ENCODE measurements at regions of chr6 and their contacts with region 1.

Region 1: DNA sequence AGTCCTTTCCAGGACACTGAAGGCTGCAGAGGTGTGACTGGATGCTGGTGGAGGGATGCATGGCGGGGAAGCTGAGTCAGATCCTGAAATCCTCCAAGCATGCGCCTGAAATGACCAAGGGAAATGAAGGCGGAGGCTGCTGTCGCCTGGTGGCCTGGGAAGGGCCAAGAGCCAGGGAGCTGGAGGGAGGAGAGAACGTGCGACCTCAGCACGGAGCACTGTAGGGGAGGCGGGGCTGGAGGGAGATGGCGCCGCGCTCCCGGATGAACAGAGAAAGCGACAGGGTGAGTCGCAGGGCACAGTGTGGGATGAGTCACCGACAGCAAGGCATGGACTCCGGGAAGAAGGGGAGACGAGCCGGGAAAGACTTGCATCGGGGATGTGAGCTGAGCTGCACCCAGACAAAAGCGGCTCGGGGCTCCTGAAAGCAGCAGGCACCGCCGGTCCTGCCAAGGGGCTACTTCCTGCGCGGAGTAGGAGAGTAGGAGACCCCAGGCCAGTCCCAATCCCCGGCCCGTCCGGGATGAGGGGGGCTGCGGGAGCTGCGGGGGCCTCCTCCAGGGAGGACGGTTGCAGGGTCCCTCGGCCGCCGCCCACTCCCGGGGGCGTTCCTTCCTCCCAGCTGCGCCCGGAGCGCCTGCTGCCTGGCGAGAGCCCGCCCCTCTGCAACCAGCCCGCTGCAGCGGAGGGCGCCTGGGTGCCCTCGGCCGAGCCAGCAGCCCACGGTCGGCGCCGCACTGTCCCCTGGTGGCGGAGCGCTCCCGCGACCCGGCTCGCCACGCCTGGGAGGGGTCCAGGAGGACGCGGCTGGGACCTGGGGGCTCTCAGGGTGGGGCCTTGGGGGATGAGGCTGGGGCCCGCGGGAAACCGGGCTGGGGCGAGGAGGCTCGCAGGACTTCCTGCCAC is 11.0 kb upstream of the NQO2 start:
- DNase-seq: peak in 8 of 9 donors; percentile 68 to 84 (median 78)
- ATAC-seq: peak; percentile 87
- H3K4me3 ChIP-seq: peak overlapping the region; percentile 76
- H3K4me3 Mint-ChIP-seq: peak overlapping the region; percentile 88 to 98 (median 96)
- H3K27ac ChIP-seq: peak overlapping the region; percentile 94
- H3K27ac Mint-ChIP-seq: peak overlapping the region; percentile 94 to 100 (median 100)
- H3K4me1 ChIP-seq: peaks cover 14% of the 10 kb centered on the region in 2 donors
- H3K4me1 Mint-ChIP-seq: peaks cover 15 to 41% (median 30%) of the 10 kb centered on the region in 7 donors
- H3K27me3 ChIP-seq: no peaks in the 10 kb centered on the region
- H3K27me3 Mint-ChIP-seq: peaks cover 0 to 11% (median 0%) of the 10 kb centered on the region in 5 donors

Region 2: GRCh38 chr6:2841264-2842138 is 147.2 kb before region 1 on chr6 and contains the start of gene SERPINB1:
- CTCF ChIA-PET with region 1: interaction called, 53 read pairs
- POLR2A ChIA-PET with region 1: interaction called, 156 read pairs
- intact Hi-C with region 1: loop called (anchors 1 kb)
- DNase-seq: peak; percentile 52 to 88 (median 67)
- ATAC-seq: peak; percentile 89
- H3K4me3 ChIP-seq: peak within 1 kb of the TSS; percentile 69
- H3K4me3 Mint-ChIP-seq: peak within 1 kb of the TSS; percentile 86 to 100 (median 92)
- H3K27ac ChIP-seq: peak within 1 kb of the TSS; percentile 85
- H3K27ac Mint-ChIP-seq: peak within 1 kb of the TSS; percentile 86 to 96 (median 95)
- H3K4me1 ChIP-seq: peaks cover 16 to 29% of the 10 kb centered on the region in 2 donors
- H3K4me1 Mint-ChIP-seq: peaks cover 33 to 68% (median 60%) of the 10 kb centered on the region in 7 donors
- H3K27me3 ChIP-seq: no peaks in the 10 kb centered on the region
- H3K27me3 Mint-ChIP-seq: no peaks in the 10 kb centered on the region
- total RNA-seq, gene SERPINB1: 43.8 to 108 (median 62.5) TPM

Region 3: GRCh38 chr6:2900821-2901644 is 87.6 kb before region 1 on chr6:
- CTCF ChIA-PET with region 1: no interaction called
- POLR2A ChIA-PET with region 1: interaction called, 35 read pairs
- intact Hi-C with region 1: loop called in 1 of 2 experiments (anchors 2 kb)
- DNase-seq: no peak
- ATAC-seq: no peak
- H3K4me3 ChIP-seq: peak overlapping the region; percentile 85
- H3K4me3 Mint-ChIP-seq: peak overlapping the region; percentile 96 to 100 (median 99)
- H3K27ac ChIP-seq: peak overlapping the region; percentile 90
- H3K27ac Mint-ChIP-seq: peak overlapping the region; percentile 88 to 98 (median 97)
- H3K4me1 ChIP-seq: peaks cover 29 to 33% of the 10 kb centered on the region in 2 donors
- H3K4me1 Mint-ChIP-seq: peaks cover 54 to 71% (median 66%) of the 10 kb centered on the region in 7 donors
- H3K27me3 ChIP-seq: no peaks in the 10 kb centered on the region
- H3K27me3 Mint-ChIP-seq: peaks cover 0 to 4% (median 0%) of the 10 kb centered on the region in 5 donors

Region 4: DNA sequence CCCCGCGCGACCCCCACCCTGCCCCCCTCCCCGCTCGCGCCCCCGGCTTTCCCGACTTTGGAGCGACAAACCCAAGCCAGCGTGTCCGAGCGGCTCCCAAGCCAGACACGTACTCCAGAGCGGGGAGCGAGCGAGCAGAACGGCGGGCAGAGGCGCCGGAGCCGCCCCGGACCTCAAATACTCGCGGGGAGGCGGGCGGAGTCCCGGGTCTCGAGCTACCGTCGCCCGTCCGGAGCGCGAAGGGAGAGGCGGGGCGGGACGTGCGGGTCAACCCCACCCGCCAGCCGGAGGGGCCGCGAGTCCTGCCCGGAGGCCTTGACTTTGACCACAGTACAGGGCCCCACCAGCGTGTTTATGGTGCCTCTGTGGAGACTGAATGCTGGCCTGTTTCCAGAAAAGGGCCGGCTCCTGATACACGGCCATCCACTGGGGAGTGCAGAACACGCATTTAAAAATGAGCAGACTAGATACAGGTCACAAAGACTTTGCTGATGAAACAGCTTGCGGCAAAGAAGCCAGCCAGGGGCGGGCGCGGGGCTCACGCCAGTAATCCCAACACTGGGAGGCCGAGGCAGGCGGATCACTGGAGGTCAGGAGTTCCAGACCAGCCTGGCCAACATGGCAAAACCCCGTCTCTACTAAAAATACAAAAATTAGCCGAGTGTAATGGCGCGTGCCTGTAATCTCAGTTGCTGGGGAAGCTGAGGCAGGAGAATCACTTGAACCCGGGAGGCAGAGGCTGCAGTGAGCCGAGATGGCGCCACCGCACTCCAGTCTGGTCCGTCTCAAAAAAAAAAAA is 17.1 kb before region 1 on chr6 and contains the start of gene SERPINB6:
- CTCF ChIA-PET with region 1: interaction called, 4 read pairs
- POLR2A ChIA-PET with region 1: interaction called, 33 read pairs
- intact Hi-C with region 1: loop called (anchors 1 kb)
- DNase-seq: peak in 8 of 9 donors; percentile 31 to 57 (median 44)
- ATAC-seq: peak; percentile 70
- H3K4me3 ChIP-seq: peak within 1 kb of the TSS; percentile 66
- H3K4me3 Mint-ChIP-seq: peak within 1 kb of the TSS; percentile 83 to 94 (median 91)
- H3K27ac ChIP-seq: peak within 1 kb of the TSS; percentile 72
- H3K27ac Mint-ChIP-seq: peak within 1 kb of the TSS; percentile 77 to 95 (median 93)
- H3K4me1 ChIP-seq: peaks cover 7 to 19% of the 10 kb centered on the region in 2 donors
- H3K4me1 Mint-ChIP-seq: peaks cover 14 to 62% (median 48%) of the 10 kb centered on the region in 7 donors
- H3K27me3 ChIP-seq: no peaks in the 10 kb centered on the region
- H3K27me3 Mint-ChIP-seq: peaks cover 0 to 66% (median 0%) of the 10 kb centered on the region in 5 donors
- total RNA-seq, gene SERPINB6: 19.7 to 60.5 (median 56.4) TPM

Region 5: DNA sequence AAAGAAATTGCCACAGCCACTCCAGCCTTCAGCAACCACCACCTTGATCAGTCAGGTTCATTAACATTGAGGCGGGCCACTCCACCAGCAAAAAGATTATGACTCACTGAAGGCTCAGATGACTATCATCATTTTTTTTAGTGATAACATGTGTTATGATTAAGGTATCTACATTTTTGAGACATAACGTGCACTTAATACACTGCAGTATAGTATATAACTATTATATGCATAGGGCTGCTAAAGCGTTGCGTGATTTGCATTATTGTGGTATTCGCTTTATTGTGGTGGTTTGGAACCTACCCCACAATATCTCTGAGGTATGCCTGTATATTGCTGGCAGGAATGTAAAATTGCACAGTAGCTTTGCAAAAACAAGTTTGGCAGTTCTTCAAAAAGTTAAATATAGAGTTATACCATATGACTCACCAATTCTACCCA is 72.8 kb after region 1 on chr6:
- CTCF ChIA-PET with region 1: interaction called, 5 read pairs
- POLR2A ChIA-PET with region 1: interaction called, 67 read pairs
- intact Hi-C with region 1: no loop called
- DNase-seq: no peak
- ATAC-seq: no peak
- H3K4me3 ChIP-seq: no peak overlapping the region
- H3K4me3 Mint-ChIP-seq: peak overlapping the region in 1 of 10 donors; percentile 19
- H3K27ac ChIP-seq: no peak overlapping the region
- H3K27ac Mint-ChIP-seq: no peak overlapping the region
- H3K4me1 ChIP-seq: no peaks in the 10 kb centered on the region
- H3K4me1 Mint-ChIP-seq: peaks cover 18 to 41% (median 34%) of the 10 kb centered on the region in 7 donors
- H3K27me3 ChIP-seq: no peaks in the 10 kb centered on the region
- H3K27me3 Mint-ChIP-seq: peaks cover 0 to 3% (median 0%) of the 10 kb centered on the region in 5 donors

Region 6: DNA sequence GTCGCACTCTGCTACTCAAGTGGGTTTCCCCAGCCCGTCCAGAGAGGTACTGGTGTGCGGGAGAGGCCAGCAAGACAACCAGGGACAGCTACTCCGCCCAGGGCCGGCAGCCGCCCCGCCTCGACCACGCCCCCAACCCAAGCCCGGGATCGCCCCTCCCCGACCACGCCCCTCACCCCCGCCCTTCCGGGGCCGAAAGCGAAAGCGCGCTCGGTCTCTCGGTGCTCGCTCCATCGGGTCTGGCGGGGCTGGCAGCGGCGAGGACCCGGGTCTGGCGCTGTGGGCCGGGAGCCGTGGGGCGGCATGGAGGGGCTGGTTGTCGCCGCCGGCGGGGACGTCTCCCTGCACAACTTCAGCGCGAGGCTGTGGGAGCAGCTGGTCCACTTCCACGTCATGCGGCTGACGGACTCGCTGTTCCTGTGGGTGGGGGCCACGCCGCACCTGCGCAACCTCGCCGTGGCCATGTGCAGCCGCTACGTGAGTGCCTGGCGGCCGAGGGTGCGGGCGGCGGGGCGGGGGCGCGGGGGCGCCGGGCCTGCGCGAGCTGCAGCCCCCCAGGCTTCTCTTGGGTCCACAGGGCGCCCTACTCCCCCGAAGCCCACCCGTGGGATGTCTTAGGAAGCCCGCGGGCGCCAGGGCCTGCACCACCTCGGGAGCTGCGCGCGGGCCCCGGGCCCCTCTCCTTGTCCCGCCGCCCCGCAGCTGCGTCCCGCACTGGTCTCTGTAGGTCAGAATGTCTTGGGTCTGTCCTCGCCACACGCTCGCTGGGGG is 270.2 kb after region 1 on chr6 and contains the start of gene PSMG4:
- CTCF ChIA-PET with region 1: no interaction called
- POLR2A ChIA-PET with region 1: no interaction called
- intact Hi-C with region 1: loop called in 1 of 2 experiments (anchors 2 kb)
- DNase-seq: peak; percentile 81 to 98 (median 89)
- ATAC-seq: peak; percentile 97
- H3K4me3 ChIP-seq: peak within 1 kb of the TSS; percentile 85
- H3K4me3 Mint-ChIP-seq: peak within 1 kb of the TSS; percentile 85 to 99 (median 97)
- H3K27ac ChIP-seq: peak within 1 kb of the TSS; percentile 80
- H3K27ac Mint-ChIP-seq: peak within 1 kb of the TSS; percentile 84 to 98 (median 92)
- H3K4me1 ChIP-seq: peaks cover 19 to 26% of the 10 kb centered on the region in 2 donors
- H3K4me1 Mint-ChIP-seq: peaks cover 28 to 45% (median 42%) of the 10 kb centered on the region in 7 donors
- H3K27me3 ChIP-seq: no peaks in the 10 kb centered on the region
- H3K27me3 Mint-ChIP-seq: peaks cover 0 to 25% (median 0%) of the 10 kb centered on the region in 5 donors
- total RNA-seq, gene PSMG4: 15.6 to 45.0 (median 27.7) TPM